ENCODE measurements at regions of chrX and their contacts with region 1.

Region 1: GRCh38 chrX:45697591-45697990 is 496.9 kb upstream of the DIPK2B start:
- DNase-seq: peak; percentile 94
- H3K4me3 ChIP-seq: no peak overlapping the region
- H3K27ac ChIP-seq: peak overlapping the region; percentile 92
- H3K4me1 ChIP-seq: peaks cover 22% of the 10 kb centered on the region
- H3K27me3 ChIP-seq: no peaks in the 10 kb centered on the region
- CTCF ChIP-seq: no peak
- POLR2A ChIP-seq: no peak

Region 2: GRCh38 chrX:45505214-45505613 is 192.4 kb before region 1 on chrX:
- CTCF ChIA-PET with region 1: no interaction called
- POLR2A ChIA-PET with region 1: no interaction called
- dilution Hi-C with region 1: no loop called
- intact Hi-C with region 1: loop called (anchors 1 kb)
- DNase-seq: peak; percentile 92
- H3K4me3 ChIP-seq: no peak overlapping the region
- H3K27ac ChIP-seq: peak overlapping the region; percentile 96
- H3K4me1 ChIP-seq: peaks cover 35% of the 10 kb centered on the region
- H3K27me3 ChIP-seq: no peaks in the 10 kb centered on the region
- CTCF ChIP-seq: no peak
- POLR2A ChIP-seq: peak; percentile 36

Region 3: DNA sequence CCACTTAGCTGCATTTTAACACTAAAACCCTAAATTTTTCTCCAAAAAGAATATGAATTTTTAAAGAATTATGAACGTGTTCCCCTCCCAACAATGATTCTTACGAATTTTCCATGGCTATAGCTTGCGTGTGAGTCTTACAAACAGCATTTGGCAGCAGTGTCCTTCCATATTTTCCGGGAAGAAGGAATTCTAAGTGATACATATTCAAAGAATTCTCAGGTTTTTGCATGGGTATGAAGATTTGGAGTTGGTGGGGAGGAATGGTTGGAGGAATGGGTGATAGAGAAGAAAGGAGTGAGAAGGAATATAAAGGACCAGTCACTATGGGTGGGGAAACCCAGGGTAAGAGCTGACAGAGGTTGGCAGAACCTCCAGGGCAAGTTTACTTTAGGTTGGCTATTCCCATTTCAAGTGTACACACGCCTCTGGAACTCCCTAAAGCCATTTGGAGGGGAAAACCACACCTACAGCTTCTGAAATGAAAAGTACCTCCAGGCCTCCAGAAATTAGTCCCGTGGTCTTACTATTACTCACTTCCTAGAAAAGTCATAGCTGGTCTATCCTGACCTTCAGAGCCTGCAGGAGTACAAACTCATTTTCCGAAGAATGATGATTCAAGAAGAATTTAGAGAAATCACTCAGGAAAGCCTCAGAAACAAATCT is 76.1 kb before region 1 on chrX:
- CTCF ChIA-PET with region 1: interaction called, 4 read pairs
- POLR2A ChIA-PET with region 1: interaction called, 3 read pairs
- dilution Hi-C with region 1: no loop called
- intact Hi-C with region 1: loop called (anchors 1 kb)
- DNase-seq: peak; percentile 54
- H3K4me3 ChIP-seq: no peak overlapping the region
- H3K27ac ChIP-seq: peak overlapping the region; percentile 75
- H3K4me1 ChIP-seq: peaks cover 22% of the 10 kb centered on the region
- H3K27me3 ChIP-seq: no peaks in the 10 kb centered on the region
- CTCF ChIP-seq: no peak
- POLR2A ChIP-seq: peak; percentile 30

Region 4: GRCh38 chrX:45758319-45758718 is 60.7 kb after region 1 on chrX:
- CTCF ChIA-PET with region 1: no interaction called
- POLR2A ChIA-PET with region 1: no interaction called
- dilution Hi-C with region 1: no loop called
- intact Hi-C with region 1: loop called (anchors 1 kb)
- DNase-seq: peak; percentile 86
- H3K4me3 ChIP-seq: peak overlapping the region in 1 of 3 experiments; percentile 23
- H3K27ac ChIP-seq: peak overlapping the region; percentile 94
- H3K4me1 ChIP-seq: peaks cover 90% of the 10 kb centered on the region
- H3K27me3 ChIP-seq: no peaks in the 10 kb centered on the region
- CTCF ChIP-seq: no peak
- POLR2A ChIP-seq: no peak

Measured in endothelial cell of umbilical vein (primary cell).